ENCODE measurements at regions of chr1 and their contacts with region 1.

Region 1: GRCh38 chr1:99849744-99850458 is at the start of gene AGL:
- DNase-seq: peak; percentile 82
- ATAC-seq: peak; percentile 95
- H3K4me3 Mint-ChIP-seq: peak within 1 kb of the TSS; percentile 97
- H3K27ac Mint-ChIP-seq: peak within 1 kb of the TSS; percentile 89
- H3K4me1 Mint-ChIP-seq: peaks cover 26% of the 10 kb centered on the region
- H3K27me3 Mint-ChIP-seq: no peaks in the 10 kb centered on the region
- CTCF ChIP-seq: no peak
- total RNA-seq, gene AGL: 19.6 and 21.8 TPM in 2 replicates

Region 2: DNA sequence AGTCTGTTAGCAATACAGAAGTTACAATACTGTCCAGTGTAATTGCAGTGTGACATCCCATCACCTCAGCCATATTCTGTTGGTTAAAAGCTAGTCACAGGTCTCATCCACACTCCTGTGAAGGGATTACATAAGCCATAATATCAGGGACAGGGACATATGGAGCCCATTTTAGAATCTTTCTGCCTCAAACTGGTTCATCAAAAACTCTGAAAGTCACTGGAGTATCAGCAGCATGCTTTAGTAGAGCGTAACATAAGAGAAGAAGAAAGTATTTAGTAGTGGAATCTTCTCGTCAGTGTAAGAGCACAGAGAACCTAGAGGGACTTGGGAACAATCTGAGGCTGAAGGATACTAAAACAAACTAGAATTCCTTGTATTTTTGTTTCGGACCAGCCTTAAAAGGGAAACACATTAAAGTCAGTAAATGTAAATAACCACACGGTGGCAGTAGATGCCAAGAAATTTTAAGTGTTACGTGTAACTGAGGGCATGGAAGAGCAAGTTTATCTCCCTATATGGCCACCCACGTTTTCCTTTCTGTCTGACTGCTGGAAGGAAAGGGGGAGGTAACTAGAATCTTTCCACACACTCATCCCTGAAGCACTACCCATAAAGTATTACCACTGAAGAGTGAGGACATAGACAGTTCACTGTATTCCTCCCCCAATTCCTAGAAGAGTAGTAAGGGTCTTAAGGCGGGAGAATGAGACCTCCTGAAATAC is 41.3 kb before region 1 on chr1:
- CTCF ChIA-PET with region 1: no interaction called
- POLR2A ChIA-PET with region 1: interaction called, 17 read pairs
- intact Hi-C with region 1: no loop called
- DNase-seq: no peak
- ATAC-seq: peak; percentile 71
- H3K4me3 Mint-ChIP-seq: no peak overlapping the region
- H3K27ac Mint-ChIP-seq: no peak overlapping the region
- H3K4me1 Mint-ChIP-seq: peaks cover 4% of the 10 kb centered on the region
- H3K27me3 Mint-ChIP-seq: peaks cover 10% of the 10 kb centered on the region
- CTCF ChIP-seq: peak; percentile 52

Region 3: DNA sequence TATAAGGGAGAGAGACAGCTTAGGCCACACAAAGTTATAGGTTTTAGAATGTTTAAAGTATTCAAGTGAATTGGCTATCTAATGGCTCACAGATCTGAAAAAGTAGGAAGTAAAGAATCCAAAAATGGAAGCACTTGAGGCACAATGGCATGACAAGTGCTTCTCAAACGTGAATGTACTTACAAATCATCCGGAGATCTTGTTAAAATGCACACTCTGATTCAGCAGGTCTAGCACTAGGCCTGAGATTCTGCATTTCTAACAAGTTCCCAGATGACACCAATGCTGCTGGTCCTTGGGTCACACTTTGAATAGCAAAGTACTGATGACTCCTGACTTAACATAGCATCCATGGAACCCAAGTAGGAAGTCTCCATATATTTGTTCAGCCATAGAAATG is 20.6 kb before region 1 on chr1:
- CTCF ChIA-PET with region 1: no interaction called
- POLR2A ChIA-PET with region 1: no interaction called
- intact Hi-C with region 1: no loop called
- DNase-seq: no peak
- ATAC-seq: no peak
- H3K4me3 Mint-ChIP-seq: no peak overlapping the region
- H3K27ac Mint-ChIP-seq: no peak overlapping the region
- H3K4me1 Mint-ChIP-seq: peaks cover 2% of the 10 kb centered on the region
- H3K27me3 Mint-ChIP-seq: peaks cover 11% of the 10 kb centered on the region
- CTCF ChIP-seq: no peak

Region 4: DNA sequence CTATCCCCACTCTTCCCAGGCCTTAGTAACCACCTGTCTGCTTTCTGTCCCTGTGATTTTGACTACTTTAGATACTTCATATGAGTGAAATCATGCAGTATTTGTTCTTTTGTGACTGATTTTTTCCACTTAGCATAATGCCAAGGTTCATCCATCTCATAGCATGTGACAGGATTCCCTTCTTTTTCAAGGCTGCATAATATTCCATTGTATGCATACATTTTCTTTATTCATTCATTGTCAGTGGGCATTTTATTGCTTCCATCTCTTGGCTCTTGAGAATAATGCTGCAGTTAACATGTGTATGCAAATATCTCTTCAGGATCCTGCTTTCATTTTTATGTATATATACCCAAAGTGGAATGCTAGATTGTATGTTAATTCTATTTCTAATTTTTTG is 56.6 kb after region 1 on chr1:
- CTCF ChIA-PET with region 1: no interaction called
- POLR2A ChIA-PET with region 1: no interaction called
- intact Hi-C with region 1: no loop called
- DNase-seq: no peak
- ATAC-seq: no peak
- H3K4me3 Mint-ChIP-seq: no peak overlapping the region
- H3K27ac Mint-ChIP-seq: no peak overlapping the region
- H3K4me1 Mint-ChIP-seq: no peaks in the 10 kb centered on the region
- H3K27me3 Mint-ChIP-seq: no peaks in the 10 kb centered on the region
- CTCF ChIP-seq: no peak

Region 5: GRCh38 chr1:99969729-99970621 is 120.1 kb after region 1 on chr1 and contains the start of gene SLC35A3:
- CTCF ChIA-PET with region 1: no interaction called
- POLR2A ChIA-PET with region 1: interaction called, 4 read pairs
- intact Hi-C with region 1: loop called (anchors 1 kb)
- DNase-seq: peak; percentile 73
- ATAC-seq: peak; percentile 83
- H3K4me3 Mint-ChIP-seq: peak within 1 kb of the TSS; percentile 100
- H3K27ac Mint-ChIP-seq: peak within 1 kb of the TSS; percentile 95
- H3K4me1 Mint-ChIP-seq: peaks cover 27% of the 10 kb centered on the region
- H3K27me3 Mint-ChIP-seq: no peaks in the 10 kb centered on the region
- CTCF ChIP-seq: no peak
- total RNA-seq, gene SLC35A3: 18.3 and 21.1 TPM in 2 replicates

Region 6: DNA sequence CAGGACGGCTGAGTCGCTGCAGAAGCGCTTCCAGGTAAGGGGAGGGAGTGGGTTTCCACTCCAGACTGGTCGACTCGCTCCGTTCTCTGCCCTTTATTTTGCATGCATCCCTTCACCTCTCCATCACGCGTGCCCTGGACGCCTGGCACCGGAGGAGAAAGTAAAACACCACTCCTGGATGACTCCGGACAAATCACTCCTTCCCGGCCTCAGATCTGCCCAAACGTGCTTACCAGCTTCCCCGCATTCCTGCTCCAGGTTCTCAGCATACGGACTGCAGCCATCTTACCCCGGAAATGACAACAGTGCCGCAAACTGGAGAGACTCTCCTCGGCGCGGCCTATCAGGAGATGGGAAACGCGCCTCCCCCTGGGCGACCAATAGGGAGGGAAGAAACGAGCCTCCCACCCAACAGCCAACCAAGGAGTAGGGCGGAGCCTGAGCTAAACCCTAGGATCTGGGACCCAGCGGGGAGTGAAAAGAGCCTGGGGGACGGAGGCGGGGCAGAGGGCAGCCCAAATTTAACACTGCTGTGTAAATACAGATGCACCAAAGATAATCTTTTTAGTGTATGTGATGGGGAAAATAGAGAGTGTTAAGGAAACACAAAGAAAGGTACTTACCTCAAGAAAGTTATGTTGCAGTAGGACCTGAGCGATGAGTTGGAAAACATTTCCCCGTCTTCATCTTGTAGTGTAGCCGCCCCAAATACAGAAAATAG is 399.8 kb after region 1 on chr1 and contains the start of gene DBT:
- CTCF ChIA-PET with region 1: no interaction called
- POLR2A ChIA-PET with region 1: interaction called, 17 read pairs
- intact Hi-C with region 1: no loop called
- DNase-seq: peak; percentile 77
- ATAC-seq: peak; percentile 100
- H3K4me3 Mint-ChIP-seq: no peak within 1 kb of the TSS
- H3K27ac Mint-ChIP-seq: no peak within 1 kb of the TSS
- H3K4me1 Mint-ChIP-seq: peaks cover 7% of the 10 kb centered on the region
- H3K27me3 Mint-ChIP-seq: no peaks in the 10 kb centered on the region
- CTCF ChIP-seq: no peak
- total RNA-seq, gene DBT: 9.8 and 11.6 TPM in 2 replicates

Region 7: DNA sequence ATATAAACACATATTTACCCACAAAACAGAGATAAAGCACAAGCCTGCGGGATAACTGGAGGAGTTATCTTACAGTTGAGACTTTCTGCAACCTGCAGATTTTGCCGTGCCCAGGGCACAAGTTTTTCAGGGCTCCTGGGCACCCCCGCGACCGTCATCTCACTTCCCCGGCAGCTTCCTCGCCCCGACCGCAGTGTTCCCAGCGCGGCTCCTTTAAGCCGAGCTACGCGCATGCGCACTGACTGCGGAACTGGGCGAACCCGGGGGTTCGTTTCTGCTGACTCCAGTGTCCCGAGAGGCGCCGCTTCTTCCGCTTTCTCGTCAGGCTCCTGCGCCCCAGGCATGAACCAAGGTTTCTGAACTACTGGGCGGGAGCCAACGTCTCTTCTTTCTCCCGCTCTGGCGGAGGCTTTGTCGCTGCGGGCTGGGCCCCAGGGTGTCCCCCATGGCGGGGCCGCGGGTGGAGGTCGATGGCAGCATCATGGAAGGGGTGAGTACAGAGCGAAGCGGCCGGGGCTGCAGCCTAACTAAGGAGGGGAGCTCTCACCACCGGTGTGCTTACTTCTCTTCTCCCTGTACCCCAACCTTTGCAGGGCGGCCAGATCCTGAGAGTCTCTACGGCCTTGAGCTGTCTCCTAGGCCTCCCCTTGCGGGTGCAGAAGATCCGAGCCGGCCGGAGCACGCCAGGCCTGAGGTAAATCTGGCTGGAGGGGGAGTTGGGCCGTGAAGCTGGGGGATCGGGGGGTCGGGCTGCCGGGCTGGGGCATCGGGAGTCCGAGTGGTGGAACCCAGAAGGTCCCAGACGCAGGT is 416.2 kb after region 1 on chr1 and contains the start of gene RTCA:
- CTCF ChIA-PET with region 1: no interaction called
- POLR2A ChIA-PET with region 1: no interaction called
- intact Hi-C with region 1: loop called (anchors 5 kb)
- DNase-seq: peak; percentile 91
- ATAC-seq: peak; percentile 95
- H3K4me3 Mint-ChIP-seq: peak within 1 kb of the TSS; percentile 100
- H3K27ac Mint-ChIP-seq: peak within 1 kb of the TSS; percentile 98
- H3K4me1 Mint-ChIP-seq: peaks cover 38% of the 10 kb centered on the region
- H3K27me3 Mint-ChIP-seq: no peaks in the 10 kb centered on the region
- CTCF ChIP-seq: no peak
- total RNA-seq, gene RTCA: 32.3 and 34.5 TPM in 2 replicates

Region 8: GRCh38 chr1:100895540-100896483 is 1045.9 kb after region 1 on chr1 and contains the start of gene SLC30A7:
- CTCF ChIA-PET with region 1: no interaction called
- POLR2A ChIA-PET with region 1: interaction called, 6 read pairs
- intact Hi-C with region 1: loop called (anchors 2 kb)
- DNase-seq: peak; percentile 97
- ATAC-seq: peak; percentile 86
- H3K4me3 Mint-ChIP-seq: peak within 1 kb of the TSS; percentile 98
- H3K27ac Mint-ChIP-seq: peak within 1 kb of the TSS; percentile 95
- H3K4me1 Mint-ChIP-seq: peaks cover 29% of the 10 kb centered on the region
- H3K27me3 Mint-ChIP-seq: no peaks in the 10 kb centered on the region
- CTCF ChIP-seq: no peak
- total RNA-seq, gene SLC30A7: 21.1 and 25.7 TPM in 2 replicates

Measured in activated B cell treated with CpG ODN at 0.5 μM for 24 hours (primary cell).